ENCODE measurements at regions of chr14 and their contacts with region 1.

Region 1: GRCh38 chr14:76968621-76969063 is 59.9 kb downstream of the IRF2BPL start:
- DNase-seq: no peak
- ATAC-seq: no peak

Region 2: DNA sequence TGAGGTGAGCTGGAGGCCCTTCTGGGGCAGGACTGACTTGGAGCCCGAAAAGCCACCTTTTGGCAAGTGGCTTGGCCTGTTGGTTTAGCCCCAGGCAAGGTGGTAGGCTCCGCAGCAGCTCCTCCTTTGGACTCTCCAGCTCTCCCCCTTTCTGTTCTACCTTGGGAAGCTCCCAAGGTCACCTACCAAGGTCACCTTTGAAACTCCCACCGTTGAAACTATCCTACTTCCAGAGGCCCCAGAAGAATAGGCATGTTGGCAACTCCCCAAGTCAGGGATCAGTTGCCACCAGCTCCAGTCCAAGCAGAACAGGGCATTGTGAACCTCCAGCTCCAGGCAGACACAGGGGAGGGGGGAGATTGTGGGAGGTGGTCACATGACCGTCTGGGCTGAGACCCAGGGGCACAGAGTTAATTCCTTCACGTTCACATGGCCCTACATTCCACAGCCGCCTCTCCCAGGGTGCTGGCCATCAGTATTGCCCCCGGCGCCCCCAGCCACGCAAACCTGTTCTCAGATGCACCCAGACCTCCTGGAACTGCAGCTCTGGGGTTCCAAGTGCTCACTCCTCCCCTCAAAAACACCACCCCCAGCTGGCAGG is 45.5 kb after region 1 on chr14:
- intact Hi-C with region 1: loop called (anchors 5 kb)
- DNase-seq: peak; percentile 69
- ATAC-seq: peak; percentile 91 to 95